SK-N-SH (cell line): ENCODE measurements at regions of chr2 and their contacts with region 1.

Region 1: GRCh38 chr2:161063157-161063954 is 96.9 kb upstream of the TANK start:
- DNase-seq: peak; percentile 39
- H3K4me3 ChIP-seq: peak overlapping the region in 1 of 2 experiments; percentile 6; a peak in 1 of 4 replicates
- H3K27ac ChIP-seq: no peak overlapping the region
- H3K4me1 ChIP-seq: peaks cover 0 to 5% of the 10 kb centered on the region in 2 experiments; a peak in 1 of 4 replicates
- H3K27me3 ChIP-seq: no peaks in the 10 kb centered on the region
- CTCF ChIP-seq: peak; percentile 92
- EP300 ChIP-seq: no peak
- RAD21 ChIP-seq: peak; percentile 88

Region 2: DNA sequence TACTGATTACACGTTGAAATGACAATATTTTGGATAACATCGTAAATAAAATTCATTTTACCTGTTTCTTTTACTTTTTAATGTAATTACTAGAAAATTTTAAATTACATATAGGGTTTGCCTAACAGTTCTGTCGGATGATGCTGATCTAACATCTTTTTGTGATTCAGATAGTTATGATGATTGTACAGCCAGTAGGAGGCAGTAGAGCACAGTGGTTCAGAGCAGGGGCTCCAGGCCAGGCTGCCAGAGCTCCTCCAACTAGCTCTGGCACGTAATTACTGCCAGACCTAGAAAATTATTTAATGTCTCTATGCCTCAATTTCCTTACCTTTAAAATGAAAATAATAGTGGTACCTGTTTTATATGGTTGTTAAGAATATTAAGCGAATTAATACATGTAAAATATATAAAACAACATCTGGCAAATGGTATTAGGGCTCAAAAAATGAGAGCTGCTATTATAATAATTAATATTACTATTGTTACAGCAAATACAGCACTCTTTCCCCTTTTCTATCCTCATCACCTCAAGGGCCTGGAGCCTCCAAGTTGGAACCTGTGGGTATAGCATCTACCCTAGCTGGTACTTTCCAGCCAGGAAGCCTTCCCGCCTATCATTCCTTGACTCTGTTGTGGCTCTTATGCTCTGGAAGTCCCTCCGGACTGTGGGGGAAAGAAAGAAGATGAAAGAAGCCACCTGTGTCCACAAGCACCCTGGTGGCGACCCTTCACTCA is 953.3 kb before region 1 on chr2:
- CTCF ChIA-PET with region 1: interaction called, 17 read pairs
- POLR2A ChIA-PET with region 1: no interaction called
- DNase-seq: peak; percentile 71
- H3K4me3 ChIP-seq: no peak overlapping the region; a peak in 1 of 4 replicates
- H3K27ac ChIP-seq: peak overlapping the region in 1 of 2 experiments; percentile 58; a peak in 1 of 4 replicates
- H3K4me1 ChIP-seq: peaks cover 5 to 7% of the 10 kb centered on the region in 2 experiments; a peak in 2 of 4 replicates
- H3K27me3 ChIP-seq: no peaks in the 10 kb centered on the region
- CTCF ChIP-seq: peak; percentile 90
- EP300 ChIP-seq: peak in 1 of 2 experiments; percentile 44; a peak in 3 of 4 replicates
- RAD21 ChIP-seq: peak; percentile 99

Region 3: GRCh38 chr2:160324161-160324800 is 739.1 kb before region 1 on chr2:
- CTCF ChIA-PET with region 1: interaction called, 14 read pairs
- POLR2A ChIA-PET with region 1: no interaction called
- DNase-seq: peak; percentile 39
- H3K4me3 ChIP-seq: no peak overlapping the region
- H3K27ac ChIP-seq: 0 out of 4 replicates have a peak overlapping the region, but pooled peaks of 1 of the 2 experiments have one; percentile 20
- H3K4me1 ChIP-seq: peaks cover 0 to 3% of the 10 kb centered on the region in 2 experiments; a peak in 3 of 4 replicates
- H3K27me3 ChIP-seq: no peaks in the 10 kb centered on the region
- CTCF ChIP-seq: peak; percentile 81
- EP300 ChIP-seq: no peak
- RAD21 ChIP-seq: peak; percentile 80

Region 4: GRCh38 chr2:160928854-160929620 is 134.3 kb before region 1 on chr2:
- CTCF ChIA-PET with region 1: no interaction called
- POLR2A ChIA-PET with region 1: no interaction called
- DNase-seq: no peak
- H3K4me3 ChIP-seq: no peak overlapping the region
- H3K27ac ChIP-seq: peak overlapping the region in 1 of 2 experiments; percentile 20; a peak in 2 of 4 replicates
- H3K4me1 ChIP-seq: no peaks in the 10 kb centered on the region
- H3K27me3 ChIP-seq: no peaks in the 10 kb centered on the region
- CTCF ChIP-seq: no peak
- EP300 ChIP-seq: no peak
- RAD21 ChIP-seq: no peak

Region 5: DNA sequence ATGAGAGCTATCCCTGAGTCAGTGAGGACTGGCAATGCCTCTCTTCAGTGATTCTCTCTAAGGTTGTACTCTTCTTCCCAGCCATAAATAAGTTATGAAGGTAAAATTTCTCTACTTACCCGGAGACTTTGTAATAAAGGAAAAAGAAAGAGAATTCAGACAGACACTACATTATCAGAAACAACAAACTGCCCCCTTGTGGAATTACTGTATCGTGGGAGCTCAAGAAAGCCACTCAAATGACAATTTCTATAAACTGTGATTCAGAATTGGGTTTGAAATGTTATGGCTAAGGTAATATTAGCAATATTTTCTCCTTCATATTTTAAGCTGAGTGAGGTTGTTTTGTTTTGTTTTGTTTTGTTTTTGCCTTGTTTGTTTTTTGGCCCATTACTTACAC is 59.0 kb before region 1 on chr2:
- CTCF ChIA-PET with region 1: interaction called, 20 read pairs
- POLR2A ChIA-PET with region 1: no interaction called
- DNase-seq: peak; percentile 28
- H3K4me3 ChIP-seq: no peak overlapping the region
- H3K27ac ChIP-seq: no peak overlapping the region
- H3K4me1 ChIP-seq: no peaks in the 10 kb centered on the region
- H3K27me3 ChIP-seq: no peaks in the 10 kb centered on the region
- CTCF ChIP-seq: peak; percentile 61
- EP300 ChIP-seq: no peak
- RAD21 ChIP-seq: peak; percentile 54

Region 6: DNA sequence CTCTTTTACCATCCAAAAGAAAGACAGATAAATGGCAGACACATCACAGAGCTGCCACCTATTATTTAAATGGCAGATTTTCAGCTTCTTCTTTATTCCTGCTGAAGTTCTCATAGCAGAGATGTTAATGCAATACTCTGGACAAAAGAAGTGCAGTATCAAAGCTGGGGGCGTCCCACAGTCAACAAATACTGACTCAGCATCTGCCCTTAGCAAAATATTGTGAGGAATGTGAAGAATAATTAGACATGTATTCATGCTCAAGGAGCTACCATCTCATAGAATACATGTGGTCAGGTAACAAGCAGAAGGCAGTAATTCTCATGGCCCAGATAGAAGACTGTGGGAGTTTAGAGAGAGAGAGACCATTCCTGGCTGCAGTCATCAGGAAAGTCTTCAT is 11.1 kb before region 1 on chr2:
- CTCF ChIA-PET with region 1: interaction called, 48 read pairs
- POLR2A ChIA-PET with region 1: no interaction called
- DNase-seq: no peak
- H3K4me3 ChIP-seq: no peak overlapping the region
- H3K27ac ChIP-seq: no peak overlapping the region
- H3K4me1 ChIP-seq: no peaks in the 10 kb centered on the region
- H3K27me3 ChIP-seq: peaks cover 8% of the 10 kb centered on the region; the same call in 1 of the 2 replicates
- CTCF ChIP-seq: no peak
- EP300 ChIP-seq: no peak
- RAD21 ChIP-seq: no peak

Region 7: DNA sequence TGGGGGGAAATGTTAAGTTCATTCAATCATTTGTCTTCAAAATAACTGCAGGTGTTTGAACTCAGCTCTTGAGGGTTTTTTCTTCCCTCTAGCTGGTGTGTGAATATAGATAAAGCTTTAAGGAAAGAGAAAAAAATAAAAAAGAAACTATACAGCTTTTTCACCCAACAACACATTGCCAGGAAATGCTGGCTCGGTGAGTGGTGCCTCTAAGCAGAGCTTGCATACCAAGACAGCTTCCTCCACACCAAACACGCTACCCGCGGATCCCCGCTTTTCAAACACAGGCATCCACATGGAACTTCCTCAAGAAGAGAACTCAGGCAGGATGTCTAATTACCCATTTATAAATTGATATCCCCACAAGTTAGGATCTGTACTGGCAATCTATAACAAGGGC is 27.1 kb after region 1 on chr2:
- CTCF ChIA-PET with region 1: interaction called, 14 read pairs
- POLR2A ChIA-PET with region 1: no interaction called
- DNase-seq: no peak
- H3K4me3 ChIP-seq: no peak overlapping the region
- H3K27ac ChIP-seq: no peak overlapping the region
- H3K4me1 ChIP-seq: no peaks in the 10 kb centered on the region
- H3K27me3 ChIP-seq: no peaks in the 10 kb centered on the region
- CTCF ChIP-seq: no peak
- EP300 ChIP-seq: no peak
- RAD21 ChIP-seq: no peak